Cardiac septum (tissue), 1 donor: ENCODE measurements at regions of chr1 and their contacts with region 1.

Region 1: GRCh38 chr1:185987611-185988321 is 253.6 kb downstream of the HMCN1 start:
- DNase-seq: no peak

Region 2: DNA sequence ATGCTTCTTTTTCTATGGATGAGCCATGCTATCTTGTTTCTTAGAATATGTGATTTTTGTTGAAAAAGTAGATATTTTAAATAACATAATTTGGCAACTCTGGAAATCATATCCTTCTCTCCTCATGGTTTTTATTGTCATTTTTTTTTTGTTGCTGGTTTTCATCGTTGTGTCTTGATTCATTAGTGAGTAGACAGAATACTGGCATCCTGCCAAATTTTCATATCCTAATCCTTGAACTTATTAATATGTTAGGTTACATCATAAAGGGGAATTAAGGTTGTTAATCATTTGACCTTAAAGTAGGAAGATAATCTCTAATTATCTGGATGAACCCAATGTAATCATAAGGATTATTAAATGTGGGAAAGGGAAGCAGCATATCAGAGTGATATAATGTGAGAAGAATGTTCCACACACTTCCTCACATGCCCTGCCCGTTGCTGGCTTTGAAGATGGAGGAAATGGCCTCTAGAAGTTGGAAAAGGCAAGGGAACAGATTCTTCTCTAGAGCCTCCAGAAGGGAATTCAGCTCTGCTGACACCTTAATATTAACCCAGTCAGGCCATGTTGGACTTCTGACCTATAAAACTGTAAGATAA is 46.1 kb after region 1 on chr1:
- intact Hi-C with region 1: loop called (anchors 5 kb)
- DNase-seq: no peak